OCI-LY7 (cell line): ENCODE measurements at regions of chr4 and their contacts with region 1.

Region 1: DNA sequence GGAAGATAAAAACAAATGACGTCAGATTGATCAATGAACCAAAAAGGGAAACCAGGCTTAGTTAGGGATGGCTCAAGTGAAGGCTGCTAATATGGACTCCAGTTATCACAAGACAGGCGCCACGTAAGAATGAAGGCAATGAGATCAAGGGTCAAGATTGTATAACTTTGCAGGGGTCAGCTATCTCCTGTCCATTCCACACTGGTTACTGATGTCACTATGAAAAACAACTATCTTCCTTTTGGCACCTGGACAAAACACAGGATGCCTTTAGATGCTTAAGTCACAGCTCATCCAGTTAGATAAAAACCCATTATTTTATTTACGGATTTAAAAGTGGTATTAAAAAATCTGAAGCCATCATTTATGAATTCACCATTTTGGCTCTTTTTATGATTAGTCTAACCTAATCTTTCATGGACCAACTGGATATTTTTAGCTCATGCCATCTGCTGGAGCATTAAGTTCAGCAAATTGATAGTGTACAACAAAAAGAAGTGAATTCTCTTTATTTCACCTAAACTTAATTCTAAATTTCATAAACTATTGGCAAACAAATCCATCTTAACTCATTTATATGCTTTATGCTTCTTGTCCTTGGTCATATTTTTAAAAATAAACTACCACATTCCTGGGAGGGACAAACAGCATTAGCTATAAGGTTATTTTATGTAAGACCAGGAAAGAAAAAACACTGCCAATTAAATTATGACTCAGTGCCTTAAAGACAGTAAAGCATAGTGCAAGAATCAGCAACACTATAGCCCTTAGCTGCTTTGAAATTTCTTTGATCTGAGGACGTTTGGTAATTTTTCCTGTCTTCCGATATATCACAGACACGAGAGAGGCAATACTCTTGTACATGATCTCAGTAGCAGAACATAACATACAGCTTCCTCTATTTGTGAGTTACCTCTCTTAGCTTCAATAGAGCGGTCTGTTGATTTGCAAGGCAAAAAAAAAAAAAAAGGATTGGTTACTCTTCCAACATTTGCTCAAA is 27.0 kb downstream of the DHX15 start:
- DNase-seq: no peak
- H3K4me3 ChIP-seq: no peak overlapping the region
- H3K27ac ChIP-seq: no peak overlapping the region
- H3K4me1 ChIP-seq: peaks cover 19% of the 10 kb centered on the region
- CTCF ChIP-seq: no peak

Region 2: GRCh38 chr4:24497221-24497620 is 60.1 kb before region 1 on chr4:
- CTCF ChIA-PET with region 1: no interaction called
- POLR2A ChIA-PET with region 1: no interaction called
- intact Hi-C with region 1: no loop called
- DNase-seq: no peak
- H3K4me3 ChIP-seq: no peak overlapping the region
- H3K27ac ChIP-seq: no peak overlapping the region
- H3K4me1 ChIP-seq: no peaks in the 10 kb centered on the region
- CTCF ChIP-seq: no peak

Region 3: DNA sequence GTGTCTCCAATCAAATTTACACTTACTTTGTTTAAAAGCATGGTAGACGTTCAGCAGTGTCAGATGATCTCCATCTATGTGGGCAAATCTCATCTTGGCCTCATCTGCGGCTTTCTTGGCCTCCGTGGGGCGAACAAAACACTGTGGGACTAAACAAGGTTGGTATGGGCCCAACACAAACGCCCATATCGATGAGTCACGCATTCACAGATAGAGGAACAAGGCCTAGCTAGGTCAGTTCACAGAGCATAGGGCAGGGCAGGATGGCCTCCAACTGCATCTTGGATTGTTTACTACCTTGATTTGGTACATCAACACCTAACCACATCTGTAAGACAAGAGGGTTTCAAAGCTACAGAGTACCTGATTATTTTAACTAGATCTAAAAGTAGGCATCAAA is 20.3 kb before region 1 on chr4:
- CTCF ChIA-PET with region 1: no interaction called
- POLR2A ChIA-PET with region 1: interaction called, 10 read pairs
- intact Hi-C with region 1: no loop called
- DNase-seq: no peak
- H3K4me3 ChIP-seq: no peak overlapping the region
- H3K27ac ChIP-seq: no peak overlapping the region
- H3K4me1 ChIP-seq: no peaks in the 10 kb centered on the region
- CTCF ChIP-seq: no peak

Region 4: GRCh38 chr4:24544208-24544988 is 12.9 kb before region 1 on chr4:
- CTCF ChIA-PET with region 1: no interaction called
- POLR2A ChIA-PET with region 1: interaction called, 10 read pairs
- intact Hi-C with region 1: no loop called
- DNase-seq: no peak
- H3K4me3 ChIP-seq: peak overlapping the region; percentile 32
- H3K27ac ChIP-seq: peak overlapping the region; percentile 37
- H3K4me1 ChIP-seq: peaks cover 34% of the 10 kb centered on the region
- CTCF ChIP-seq: no peak

Region 5: GRCh38 chr4:25400699-25401399 is 843.5 kb after region 1 on chr4:
- CTCF ChIA-PET with region 1: no interaction called
- POLR2A ChIA-PET with region 1: no interaction called
- intact Hi-C with region 1: no loop called
- DNase-seq: no peak
- H3K4me3 ChIP-seq: no peak overlapping the region
- H3K27ac ChIP-seq: no peak overlapping the region
- H3K4me1 ChIP-seq: no peaks in the 10 kb centered on the region
- CTCF ChIP-seq: no peak